Mammary epithelial cell (primary cell): ENCODE measurements at regions of chr10 and their contacts with region 1.

Region 1: DNA sequence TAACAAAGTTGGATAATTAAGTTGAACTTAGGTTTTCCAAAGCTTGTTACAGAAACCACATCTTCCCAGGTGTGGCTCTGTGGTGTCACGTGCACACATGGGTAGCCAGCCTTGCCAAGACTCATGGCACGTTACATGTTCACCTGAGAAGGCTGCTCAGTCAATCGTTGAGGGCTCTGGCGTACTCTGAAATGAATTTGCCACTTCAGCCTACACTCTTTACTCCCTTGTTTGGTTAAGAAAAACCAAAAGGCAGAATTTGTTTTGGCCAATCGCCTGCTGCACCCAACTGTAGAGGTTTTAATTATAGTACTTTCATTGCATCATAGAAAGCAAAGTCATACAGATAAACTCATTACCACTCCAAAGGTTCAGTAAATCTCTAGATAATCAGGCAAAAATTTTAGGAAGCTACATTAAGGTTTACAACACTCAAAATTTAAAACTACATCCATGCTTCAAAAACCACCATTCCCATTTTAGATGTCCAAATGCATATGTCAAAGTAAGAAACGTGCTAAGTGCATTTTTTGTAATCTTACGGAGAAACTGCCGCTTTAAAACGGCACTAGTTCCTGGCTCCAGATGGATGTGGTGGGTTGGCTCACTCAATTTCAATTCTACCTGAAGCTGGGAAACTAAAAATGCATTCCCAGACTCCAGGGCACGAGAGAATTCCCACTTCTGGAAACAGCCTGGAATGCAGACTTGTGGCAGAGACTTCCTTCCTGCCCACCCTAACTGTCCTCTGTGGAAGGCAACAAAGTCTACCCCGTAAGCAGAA is 88.4 kb downstream of the DIP2C start:
- DNase-seq: no peak
- H3K4me3 ChIP-seq: no peak overlapping the region
- H3K27ac ChIP-seq: no peak overlapping the region
- H3K4me1 ChIP-seq: no peaks in the 10 kb centered on the region
- H3K27me3 ChIP-seq: no peaks in the 10 kb centered on the region
- CTCF ChIP-seq: no peak

Region 2: DNA sequence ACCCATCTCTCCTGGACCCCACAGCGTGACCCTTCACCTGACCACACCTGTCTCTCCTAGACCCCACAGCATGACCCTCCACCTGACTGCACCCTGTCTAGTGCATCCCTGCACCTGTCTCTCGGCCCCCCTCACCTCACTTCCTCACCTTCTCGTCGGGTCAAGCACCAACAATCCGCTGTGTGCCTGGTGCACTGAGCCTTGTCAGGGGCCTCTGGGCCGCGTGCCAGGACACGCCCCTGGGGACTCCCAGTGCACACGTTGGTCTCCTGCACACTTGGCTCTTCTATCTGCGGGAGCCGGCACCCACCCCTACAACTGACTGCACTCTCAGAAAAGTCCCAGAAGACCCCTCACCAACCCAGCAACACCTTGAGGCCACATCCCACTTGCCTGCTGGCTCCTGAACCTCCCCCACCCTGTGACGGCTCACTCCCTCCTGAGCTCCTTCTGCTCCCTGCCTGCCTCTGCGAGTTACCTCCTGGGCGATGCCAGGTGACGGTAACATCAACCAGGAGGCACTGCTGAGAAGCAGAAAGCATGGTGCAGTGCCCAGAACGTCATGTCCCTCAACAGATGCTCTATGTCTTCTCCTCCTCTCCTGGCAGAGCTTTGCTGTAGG is 59.2 kb before region 1 on chr10:
- CTCF ChIA-PET with region 1: no interaction called
- dilution Hi-C with region 1: no loop called
- in situ Hi-C with region 1: no loop called
- intact Hi-C with region 1: no loop called
- DNase-seq: no peak
- H3K4me3 ChIP-seq: no peak overlapping the region
- H3K27ac ChIP-seq: no peak overlapping the region
- H3K4me1 ChIP-seq: no peaks in the 10 kb centered on the region
- H3K27me3 ChIP-seq: no peaks in the 10 kb centered on the region
- CTCF ChIP-seq: no peak

Region 3: DNA sequence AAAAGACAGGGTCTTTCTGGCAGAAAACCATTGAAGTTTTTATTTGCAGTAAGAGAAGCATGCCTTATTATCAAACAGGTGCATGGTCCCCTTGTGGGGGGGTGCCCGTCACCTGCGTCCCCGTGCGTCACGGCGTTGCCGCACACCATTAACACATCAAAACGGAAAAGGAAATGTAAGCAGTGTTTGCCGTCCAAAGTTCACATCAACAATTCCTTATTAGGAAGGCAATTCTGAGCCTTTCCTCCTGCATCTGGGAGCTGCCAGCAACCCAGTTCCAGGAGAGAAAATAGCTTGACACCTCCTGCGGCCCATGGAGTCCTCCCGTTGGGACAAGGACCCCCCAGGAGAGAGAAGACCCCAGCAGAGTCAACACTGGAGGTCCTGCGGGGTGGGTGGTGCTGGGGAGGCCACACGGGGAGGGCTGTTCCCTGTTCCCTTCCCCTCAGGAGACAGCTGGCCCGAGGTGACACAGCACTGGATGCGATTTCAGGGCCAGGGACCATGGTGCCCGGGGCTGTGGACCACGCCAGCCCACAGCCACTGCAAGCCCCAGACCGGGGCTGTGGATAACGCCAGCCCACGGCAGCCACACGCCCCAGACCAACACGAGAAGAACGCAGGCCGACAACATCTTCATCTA is 48.9 kb after region 1 on chr10:
- CTCF ChIA-PET with region 1: no interaction called
- dilution Hi-C with region 1: loop called (anchors 5 kb)
- in situ Hi-C with region 1: no loop called
- intact Hi-C with region 1: no loop called
- DNase-seq: no peak
- H3K4me3 ChIP-seq: no peak overlapping the region
- H3K27ac ChIP-seq: no peak overlapping the region
- H3K4me1 ChIP-seq: no peaks in the 10 kb centered on the region
- H3K27me3 ChIP-seq: no peaks in the 10 kb centered on the region
- CTCF ChIP-seq: no peak